Left lung (tissue), 14 donors: ENCODE measurements at regions of chr1 and their contacts with region 1.

Region 1: DNA sequence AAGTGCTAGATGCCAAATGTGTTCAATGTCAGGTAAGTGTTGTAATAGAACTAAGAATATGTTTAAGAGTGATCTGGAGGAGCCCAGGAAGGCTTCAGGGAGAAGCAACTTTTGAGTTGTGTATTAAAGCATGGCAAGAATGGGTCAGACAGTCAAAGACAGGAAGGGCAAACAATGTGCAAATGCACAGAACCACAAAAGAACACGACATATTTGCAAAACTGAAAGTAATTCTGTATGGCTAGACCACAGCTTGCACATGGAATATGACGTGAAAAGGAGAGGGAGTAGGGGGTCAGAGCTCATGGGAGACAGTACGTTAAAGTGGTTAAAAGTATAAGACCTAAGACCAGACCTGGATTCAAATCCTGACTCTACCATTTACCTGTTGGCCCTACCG is 7.1 kb upstream of the SORT1 start:
- DNase-seq: no peak
- ATAC-seq: no peak
- H3K4me3 ChIP-seq: no peak overlapping the region
- H3K27ac ChIP-seq: no peak overlapping the region
- H3K4me1 ChIP-seq: peaks cover 2 to 5% of the 10 kb centered on the region in 2 donors
- H3K27me3 ChIP-seq: no peaks in the 10 kb centered on the region
- CTCF ChIP-seq: no peak

Region 2: DNA sequence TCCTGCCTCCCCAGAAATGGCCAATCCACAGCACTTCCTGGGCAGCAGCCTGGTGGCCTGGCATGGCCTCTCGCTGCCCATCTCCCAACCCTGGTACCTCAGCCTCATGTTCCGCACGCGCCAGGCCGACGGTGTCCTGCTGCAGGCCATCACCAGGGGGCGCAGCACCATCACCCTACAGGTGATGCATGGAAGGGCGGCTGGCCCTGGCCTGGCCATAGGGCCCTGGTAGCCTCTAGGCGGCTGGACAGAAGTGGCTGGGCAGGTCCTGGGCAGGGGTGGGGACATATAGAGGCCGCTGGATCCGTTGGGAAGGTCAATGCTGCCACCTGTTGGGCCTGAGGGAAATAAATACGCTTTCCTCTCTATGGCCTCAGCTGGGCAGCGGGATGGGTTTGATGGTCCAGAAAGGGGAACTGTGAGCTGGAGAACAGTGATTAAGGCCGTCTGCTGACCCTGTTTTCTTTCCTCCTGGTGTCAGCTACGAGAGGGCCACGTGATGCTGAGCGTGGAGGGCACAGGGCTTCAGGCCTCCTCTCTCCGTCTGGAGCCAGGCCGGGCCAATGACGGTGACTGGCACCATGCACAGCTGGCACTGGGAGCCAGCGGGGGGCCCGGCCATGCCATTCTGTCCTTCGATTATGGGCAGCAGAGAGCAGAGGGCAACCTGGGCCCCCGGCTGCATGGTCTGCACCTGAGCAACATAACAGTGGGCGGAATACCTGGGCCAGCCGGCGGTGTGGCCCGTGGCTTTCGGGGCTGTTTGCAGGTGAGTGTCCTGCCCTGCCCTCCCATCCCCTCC is 141.0 kb before region 1 on chr1:
- intact Hi-C with region 1: loop called in 1 of 2 experiments (anchors 5 kb)
- DNase-seq: peak; percentile 71 to 97 (median 91)
- ATAC-seq: peak; percentile 99
- H3K4me3 ChIP-seq: no peak overlapping the region
- H3K27ac ChIP-seq: no peak overlapping the region
- H3K4me1 ChIP-seq: peaks cover 0 to 8% of the 10 kb centered on the region in 2 donors
- H3K27me3 ChIP-seq: no peaks in the 10 kb centered on the region
- CTCF ChIP-seq: peak; percentile 98

Region 3: DNA sequence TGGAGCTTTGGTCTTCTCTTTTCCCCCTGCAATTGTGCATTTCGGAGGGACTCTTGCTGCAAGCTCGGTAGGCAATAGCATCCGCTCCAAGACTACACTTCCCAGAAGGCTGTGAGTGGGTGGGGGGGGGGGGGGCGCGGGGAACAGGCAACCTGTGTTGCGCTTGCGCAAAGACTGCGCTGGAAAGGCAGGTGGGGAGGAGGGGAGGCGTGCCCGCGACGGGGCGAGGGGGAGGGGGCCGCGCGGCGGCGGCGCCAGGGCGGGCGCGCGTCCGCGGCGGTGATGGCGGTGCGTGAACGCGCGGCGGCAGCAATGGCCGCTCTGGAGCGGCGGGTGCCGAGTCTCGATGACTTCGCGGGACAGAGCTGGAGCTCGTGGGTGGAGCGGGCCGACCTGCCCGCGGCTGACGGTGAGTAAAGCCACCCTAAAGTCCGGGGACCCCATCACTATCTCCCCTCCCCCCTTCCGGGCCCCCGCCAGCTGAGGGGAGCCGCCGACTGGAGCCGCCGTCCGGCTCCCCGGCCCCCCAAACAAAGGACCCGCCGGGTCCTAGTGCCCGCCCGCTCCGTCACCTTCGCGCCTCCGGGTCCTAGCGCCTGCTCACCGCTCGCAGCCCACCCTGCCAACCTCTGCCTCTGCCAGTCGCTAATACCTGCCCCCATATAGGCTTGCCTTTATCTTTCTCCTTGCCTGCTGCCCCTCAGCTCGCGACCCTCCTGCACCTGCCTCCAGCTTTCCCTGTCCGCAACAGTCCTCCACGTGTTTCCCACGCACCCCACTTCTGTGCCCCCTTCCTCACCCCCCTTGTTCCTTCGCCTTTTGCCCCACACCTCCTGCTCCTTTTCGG is 79.1 kb after region 1 on chr1 and contains the start of gene ATXN7L2:
- intact Hi-C with region 1: no loop called
- DNase-seq: peak; percentile 92 to 96 (median 94)
- ATAC-seq: peak; percentile 96
- H3K4me3 ChIP-seq: peak within 1 kb of the TSS; percentile 51 to 64
- H3K27ac ChIP-seq: peak within 1 kb of the TSS; percentile 90 to 93
- H3K4me1 ChIP-seq: peaks cover 10 to 21% of the 10 kb centered on the region in 2 donors
- H3K27me3 ChIP-seq: peaks cover 0 to 25% of the 10 kb centered on the region in 2 donors
- CTCF ChIP-seq: no peak
- polyA plus RNA-seq, gene ATXN7L2: 7.4 to 11.7 (median 8.2) TPM

Region 4: GRCh38 chr1:109732390-109732881 is 327.6 kb after region 1 on chr1:
- intact Hi-C with region 1: no loop called
- DNase-seq: no peak
- ATAC-seq: no peak
- H3K4me3 ChIP-seq: no peak overlapping the region
- H3K27ac ChIP-seq: no peak overlapping the region
- H3K4me1 ChIP-seq: no peaks in the 10 kb centered on the region
- H3K27me3 ChIP-seq: no peaks in the 10 kb centered on the region
- CTCF ChIP-seq: no peak